A673 (cell line): ENCODE measurements at regions of chr13 and their contacts with region 1.

Region 1: DNA sequence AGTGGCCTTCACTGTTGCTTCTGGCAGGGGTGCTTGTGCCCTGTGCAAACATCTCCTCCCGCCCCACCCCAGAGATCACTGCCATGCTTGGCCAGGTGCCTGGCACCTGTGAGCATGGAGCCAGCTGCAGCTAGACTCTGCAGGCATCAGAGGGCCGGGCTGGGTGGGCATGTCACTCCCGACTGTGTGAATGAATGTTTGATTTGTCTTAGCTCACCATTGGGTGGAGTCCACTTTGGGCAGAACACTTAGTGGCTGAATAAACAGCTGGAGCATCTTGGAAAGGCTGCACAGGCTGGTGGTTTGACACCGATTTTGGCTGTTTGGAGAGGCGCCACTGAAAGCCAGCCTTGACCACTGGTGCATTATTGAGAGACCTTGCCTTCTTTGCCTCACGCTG is 267.3 kb downstream of the DLEU7 start:
- DNase-seq: no peak
- H3K4me3 ChIP-seq: no peak overlapping the region
- H3K27ac ChIP-seq: no peak overlapping the region
- H3K4me1 ChIP-seq: no peaks in the 10 kb centered on the region
- H3K27me3 ChIP-seq: no peaks in the 10 kb centered on the region
- CTCF ChIP-seq: no peak

Region 2: GRCh38 chr13:49893591-49893990 is 682.6 kb before region 1 on chr13:
- CTCF ChIA-PET with region 1: no interaction called
- POLR2A ChIA-PET with region 1: no interaction called
- intact Hi-C with region 1: no loop called
- DNase-seq: no peak
- H3K4me3 ChIP-seq: no peak overlapping the region
- H3K27ac ChIP-seq: no peak overlapping the region
- H3K4me1 ChIP-seq: no peaks in the 10 kb centered on the region
- H3K27me3 ChIP-seq: no peaks in the 10 kb centered on the region
- CTCF ChIP-seq: no peak

Region 3: DNA sequence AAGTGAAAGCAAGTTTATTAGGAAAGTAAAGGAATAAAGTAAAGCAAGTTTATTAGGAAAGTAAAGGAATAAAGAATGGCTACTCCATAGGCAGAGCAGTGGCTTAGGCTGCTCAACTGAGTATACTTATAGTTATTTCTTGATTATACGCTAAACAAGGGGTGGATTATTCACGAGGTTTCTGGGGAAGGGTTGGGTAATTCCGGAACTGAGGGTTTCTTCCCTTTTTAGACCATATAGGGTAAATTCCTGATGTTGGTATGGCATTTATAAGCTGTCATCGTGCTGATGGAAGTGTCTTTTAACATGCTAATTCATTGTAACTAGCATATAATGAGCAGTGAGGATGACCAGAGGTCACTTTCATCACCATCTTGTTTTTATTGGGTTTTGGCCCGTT is 73.1 kb after region 1 on chr13:
- CTCF ChIA-PET with region 1: no interaction called
- POLR2A ChIA-PET with region 1: no interaction called
- intact Hi-C with region 1: loop called (anchors 2 kb)
- DNase-seq: no peak
- H3K4me3 ChIP-seq: no peak overlapping the region
- H3K27ac ChIP-seq: no peak overlapping the region
- H3K4me1 ChIP-seq: no peaks in the 10 kb centered on the region
- H3K27me3 ChIP-seq: peaks cover 5% of the 10 kb centered on the region
- CTCF ChIP-seq: no peak